CD8-positive, alpha-beta T cell (primary cell): ENCODE measurements at regions of chr9 and their contacts with region 1.

Region 1: DNA sequence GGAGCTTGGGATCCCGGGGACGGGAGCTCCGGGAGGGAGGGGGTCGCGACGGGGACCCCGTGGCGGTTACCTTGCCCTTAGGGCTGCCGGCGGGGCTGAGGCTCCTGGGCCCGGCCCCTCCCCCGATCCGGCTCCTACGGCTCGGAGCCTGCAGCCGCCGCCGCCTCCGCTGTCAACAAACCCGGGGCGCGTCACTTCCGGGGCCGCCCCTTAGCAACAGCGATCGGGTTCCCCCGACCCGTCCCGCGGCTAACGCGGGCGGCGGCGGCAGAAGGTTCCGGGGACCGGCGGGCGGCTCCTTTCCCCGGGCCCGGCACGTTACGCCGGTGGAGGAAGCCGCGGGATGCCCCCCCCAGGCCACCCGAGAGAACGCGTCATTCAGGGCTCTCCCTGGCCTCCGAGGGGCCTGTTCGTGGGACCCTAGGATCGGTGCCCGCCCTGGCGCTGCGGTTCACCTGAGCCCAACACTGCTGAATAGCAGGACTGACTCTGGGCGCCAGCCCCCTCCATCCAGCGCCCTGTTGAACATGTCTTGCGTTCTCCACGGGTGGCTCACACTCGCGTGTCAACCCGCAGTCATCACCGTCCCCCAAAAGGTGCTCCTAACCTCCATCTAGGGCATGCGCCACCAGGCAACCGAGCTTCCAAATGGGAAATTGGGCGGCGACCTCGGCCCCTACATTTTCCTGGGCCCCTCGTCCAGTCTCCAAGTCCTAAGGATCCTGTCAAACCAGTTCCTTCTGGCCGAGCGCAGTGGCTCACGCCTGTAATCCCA is at the start of gene ZER1:
- DNase-seq: peak; percentile 86 to 98 (median 95)
- ATAC-seq: peak; percentile 85
- H3K4me3 ChIP-seq: peak within 1 kb of the TSS; percentile 82 to 98
- H3K4me3 Mint-ChIP-seq: peak within 1 kb of the TSS; percentile 96
- H3K27ac ChIP-seq: peak within 1 kb of the TSS; percentile 80 to 98
- H3K27ac Mint-ChIP-seq: peak within 1 kb of the TSS; percentile 99
- H3K4me1 ChIP-seq: peaks cover 22% of the 10 kb centered on the region
- H3K4me1 Mint-ChIP-seq: peaks cover 33% of the 10 kb centered on the region
- H3K27me3 ChIP-seq: no peaks in the 10 kb centered on the region
- H3K27me3 Mint-ChIP-seq: no peaks in the 10 kb centered on the region
- CTCF ChIP-seq: no peak
- total RNA-seq, gene ZER1: 35.9 to 45.2 TPM

Region 2: GRCh38 chr9:128656416-128657343 is 115.3 kb before region 1 on chr9 and contains the start of gene DYNC2I2:
- CTCF ChIA-PET with region 1: no interaction called
- POLR2A ChIA-PET with region 1: interaction called, 3 read pairs
- intact Hi-C with region 1: loop called in 1 of 2 experiments (anchors 1 kb)
- DNase-seq: peak; percentile 92 to 98 (median 97)
- ATAC-seq: peak; percentile 96
- H3K4me3 ChIP-seq: peak within 1 kb of the TSS; percentile 72 to 76
- H3K4me3 Mint-ChIP-seq: peak within 1 kb of the TSS; percentile 95
- H3K27ac ChIP-seq: peak within 1 kb of the TSS; percentile 88 to 97
- H3K27ac Mint-ChIP-seq: peak within 1 kb of the TSS; percentile 99
- H3K4me1 ChIP-seq: peaks cover 5% of the 10 kb centered on the region
- H3K4me1 Mint-ChIP-seq: peaks cover 7% of the 10 kb centered on the region
- H3K27me3 ChIP-seq: no peaks in the 10 kb centered on the region
- H3K27me3 Mint-ChIP-seq: no peaks in the 10 kb centered on the region
- CTCF ChIP-seq: no peak
- total RNA-seq, gene DYNC2I2: 3.7 to 3.9 TPM

Region 3: DNA sequence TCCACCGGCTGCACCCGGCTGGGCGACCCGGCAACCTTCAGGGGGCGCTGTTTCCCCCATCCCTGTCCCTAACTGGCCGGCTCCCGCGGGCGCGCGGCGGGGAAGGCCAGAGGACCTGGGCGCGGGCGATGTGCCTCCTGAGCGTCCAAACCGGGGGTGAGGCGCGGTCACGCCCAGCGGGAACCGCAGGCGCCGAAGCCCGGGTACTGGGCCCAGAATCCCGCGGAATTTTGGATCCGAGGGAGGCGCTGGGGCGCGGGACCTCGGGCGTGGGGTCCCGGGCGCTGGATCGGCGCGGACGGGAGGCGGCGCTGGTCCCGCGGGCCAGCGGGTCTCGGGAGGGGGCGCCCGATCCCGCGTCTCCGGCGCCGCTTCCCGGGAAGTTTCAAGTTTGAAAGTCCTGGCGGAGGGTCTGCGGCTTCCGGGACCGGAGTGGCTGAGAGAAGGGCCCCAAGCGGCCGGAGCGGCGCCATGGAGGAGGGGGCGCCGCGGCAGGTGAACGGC is 69.4 kb before region 1 on chr9 and contains the start of gene PKN3:
- CTCF ChIA-PET with region 1: interaction called, 4 read pairs
- POLR2A ChIA-PET with region 1: no interaction called
- intact Hi-C with region 1: loop called in 1 of 2 experiments (anchors 5 kb)
- DNase-seq: peak; percentile 76 to 91 (median 88)
- ATAC-seq: peak; percentile 85
- H3K4me3 ChIP-seq: peak within 1 kb of the TSS; percentile 49 to 70
- H3K4me3 Mint-ChIP-seq: peak within 1 kb of the TSS; percentile 87
- H3K27ac ChIP-seq: peak within 1 kb of the TSS in 1 of 2 experiments; percentile 51
- H3K27ac Mint-ChIP-seq: peak within 1 kb of the TSS; percentile 52
- H3K4me1 ChIP-seq: peaks cover 16% of the 10 kb centered on the region
- H3K4me1 Mint-ChIP-seq: peaks cover 13% of the 10 kb centered on the region
- H3K27me3 ChIP-seq: no peaks in the 10 kb centered on the region
- H3K27me3 Mint-ChIP-seq: no peaks in the 10 kb centered on the region
- CTCF ChIP-seq: peak; percentile 89
- total RNA-seq, gene PKN3: 1.3 to 2.0 TPM

Region 4: GRCh38 chr9:128818099-128818838 is 46.3 kb after region 1 on chr9 and contains the start of gene ENDOG:
- CTCF ChIA-PET with region 1: interaction called, 3 read pairs
- POLR2A ChIA-PET with region 1: interaction called, 6 read pairs
- intact Hi-C with region 1: loop called in 1 of 2 experiments (anchors 1 kb)
- DNase-seq: peak; percentile 94 to 98 (median 97)
- ATAC-seq: peak; percentile 96
- H3K4me3 ChIP-seq: peak within 1 kb of the TSS; percentile 59 to 75
- H3K4me3 Mint-ChIP-seq: peak within 1 kb of the TSS; percentile 91
- H3K27ac ChIP-seq: peak within 1 kb of the TSS; percentile 52 to 67
- H3K27ac Mint-ChIP-seq: peak within 1 kb of the TSS; percentile 87
- H3K4me1 ChIP-seq: peaks cover 12% of the 10 kb centered on the region
- H3K4me1 Mint-ChIP-seq: peaks cover 21% of the 10 kb centered on the region
- H3K27me3 ChIP-seq: no peaks in the 10 kb centered on the region
- H3K27me3 Mint-ChIP-seq: no peaks in the 10 kb centered on the region
- CTCF ChIP-seq: peak; percentile 98
- total RNA-seq, gene ENDOG: 6.2 to 6.4 TPM

Region 5: DNA sequence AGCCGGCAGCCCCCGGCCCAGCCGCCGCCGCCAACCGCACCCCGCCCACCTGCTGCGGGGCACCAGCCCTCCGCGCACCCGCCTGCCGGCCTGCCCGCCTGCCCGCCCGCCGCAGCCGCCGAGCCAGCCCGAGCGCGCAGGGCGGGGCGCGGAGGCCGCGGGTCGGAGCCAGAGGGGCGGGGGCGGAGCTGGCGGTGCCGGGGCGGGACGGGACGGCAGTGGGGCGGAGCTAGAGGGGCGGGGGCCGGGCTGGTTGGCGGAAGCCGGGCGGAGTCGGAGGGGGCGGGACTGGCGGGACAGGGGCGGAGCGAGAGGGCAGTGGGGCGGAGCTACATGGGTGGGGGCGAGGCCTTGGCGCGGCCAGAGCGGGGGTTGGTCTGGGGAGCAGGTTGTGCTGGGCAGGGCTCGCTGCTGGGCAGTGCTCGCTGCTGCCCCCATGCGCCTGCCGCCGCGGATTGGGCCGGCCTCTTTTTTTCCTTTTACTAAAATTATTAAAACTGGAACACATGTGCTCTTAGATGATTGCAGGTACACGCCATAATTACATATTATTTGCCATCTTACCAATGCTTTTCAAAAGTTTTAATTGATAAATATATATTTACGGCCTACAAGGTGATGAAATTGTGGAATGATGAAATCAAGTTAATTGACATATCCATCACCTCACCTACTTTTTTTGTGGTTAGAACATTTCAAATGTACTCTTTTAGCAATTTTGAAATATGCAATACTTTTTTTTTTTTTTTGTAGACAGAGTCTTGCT is 256.4 kb after region 1 on chr9 and contains the start of gene SH3GLB2:
- CTCF ChIA-PET with region 1: no interaction called
- POLR2A ChIA-PET with region 1: no interaction called
- intact Hi-C with region 1: loop called in 1 of 2 experiments (anchors 5 kb)
- DNase-seq: peak; percentile 88 to 97 (median 94)
- ATAC-seq: peak; percentile 92
- H3K4me3 ChIP-seq: peak within 1 kb of the TSS; percentile 51 to 61
- H3K4me3 Mint-ChIP-seq: peak within 1 kb of the TSS; percentile 83
- H3K27ac ChIP-seq: peak within 1 kb of the TSS; percentile 40 to 62
- H3K27ac Mint-ChIP-seq: peak within 1 kb of the TSS; percentile 64
- H3K4me1 ChIP-seq: peaks cover 13% of the 10 kb centered on the region
- H3K4me1 Mint-ChIP-seq: peaks cover 24% of the 10 kb centered on the region
- H3K27me3 ChIP-seq: no peaks in the 10 kb centered on the region
- H3K27me3 Mint-ChIP-seq: no peaks in the 10 kb centered on the region
- CTCF ChIP-seq: no peak
- total RNA-seq, gene SH3GLB2: 64.9 to 68.3 TPM